Mammary epithelial cell (primary cell): ENCODE measurements at regions of chr3 and their contacts with region 1.

Region 1: DNA sequence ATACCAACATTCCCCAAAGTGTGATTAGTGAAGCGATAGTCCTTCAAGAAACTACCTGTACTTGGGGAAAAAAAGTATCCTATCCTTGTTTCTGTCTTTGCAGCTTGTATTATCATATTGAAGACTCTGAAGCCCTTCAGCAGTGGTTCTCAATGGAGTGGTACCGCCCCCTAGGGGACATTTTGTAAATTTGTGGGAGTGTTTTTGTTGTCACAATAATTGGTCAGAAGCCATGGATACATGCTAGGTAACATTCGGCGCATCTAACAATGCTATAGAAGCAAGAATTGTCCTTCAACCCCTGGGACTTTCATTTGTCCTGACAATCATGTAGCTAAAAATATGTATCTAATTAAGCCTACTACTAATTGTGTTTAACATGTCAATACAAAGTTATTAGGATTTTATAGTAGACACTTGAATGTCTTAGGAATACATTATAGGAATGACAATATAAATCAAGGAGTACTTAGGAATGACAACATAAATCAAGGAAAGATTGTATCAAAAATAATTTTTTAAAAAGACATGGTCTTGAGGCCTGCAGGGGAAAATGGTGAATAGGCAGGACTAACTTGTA is 53.7 kb downstream of the NMD3 start:
- DNase-seq: peak; percentile 55
- H3K4me3 ChIP-seq: no peak overlapping the region
- H3K27ac ChIP-seq: no peak overlapping the region
- H3K4me1 ChIP-seq: peaks cover 5% of the 10 kb centered on the region
- H3K27me3 ChIP-seq: no peaks in the 10 kb centered on the region
- CTCF ChIP-seq: peak; percentile 66 to 80

Region 2: GRCh38 chr3:160686955-160687535 is 587.8 kb before region 1 on chr3:
- CTCF ChIA-PET with region 1: no interaction called
- dilution Hi-C with region 1: no loop called
- in situ Hi-C with region 1: loop called in 1 of 2 experiments (anchors 25 kb)
- intact Hi-C with region 1: no loop called
- DNase-seq: no peak
- H3K4me3 ChIP-seq: no peak overlapping the region
- H3K27ac ChIP-seq: no peak overlapping the region
- H3K4me1 ChIP-seq: no peaks in the 10 kb centered on the region
- H3K27me3 ChIP-seq: no peaks in the 10 kb centered on the region
- CTCF ChIP-seq: peak; percentile 41 to 43

Region 3: DNA sequence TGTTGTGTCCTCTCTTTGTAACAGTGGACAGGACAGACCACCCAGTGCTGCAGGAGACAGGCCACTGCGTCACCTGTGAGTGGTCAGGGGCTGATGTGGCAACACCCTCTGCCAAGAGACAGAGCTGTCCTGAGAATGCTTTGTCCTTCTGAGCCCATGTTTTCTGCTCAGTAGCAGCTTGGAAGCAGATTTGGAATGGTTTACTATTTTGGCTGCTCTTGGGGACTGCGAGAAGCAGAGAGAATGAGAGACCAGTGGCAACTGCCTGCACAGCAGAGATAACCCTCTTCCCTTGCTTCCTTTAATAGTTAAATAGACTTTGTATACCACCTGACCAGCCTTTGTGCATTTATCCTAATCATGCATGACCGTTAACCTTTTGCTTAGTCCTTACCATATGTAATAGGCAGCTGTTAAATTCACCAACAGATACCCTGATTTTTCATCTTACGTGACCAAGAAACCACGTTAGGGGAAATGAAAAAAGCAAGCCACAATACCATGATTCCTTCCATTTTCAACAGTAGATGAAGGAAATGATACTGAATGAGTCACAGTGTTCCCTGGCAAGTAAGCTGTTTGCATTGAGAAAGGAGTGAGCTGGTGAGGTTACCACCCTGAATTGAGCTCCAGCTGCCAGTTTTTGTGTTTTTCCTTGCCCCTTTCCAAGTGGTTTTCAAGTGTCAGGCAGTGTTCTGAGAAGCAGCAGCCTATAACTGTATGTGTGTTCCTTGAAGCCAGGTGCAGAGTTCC is 205.1 kb before region 1 on chr3:
- CTCF ChIA-PET with region 1: no interaction called
- dilution Hi-C with region 1: no loop called
- in situ Hi-C with region 1: no loop called
- intact Hi-C with region 1: no loop called
- DNase-seq: peak; percentile 79
- H3K4me3 ChIP-seq: no peak overlapping the region
- H3K27ac ChIP-seq: no peak overlapping the region
- H3K4me1 ChIP-seq: peaks cover 15% of the 10 kb centered on the region
- H3K27me3 ChIP-seq: no peaks in the 10 kb centered on the region
- CTCF ChIP-seq: no peak